AG04450 (cell line): ENCODE measurements at regions of chr4 and their contacts with region 1.

Region 1: GRCh38 chr4:3480528-3481112 is 17.5 kb downstream of the DOK7 start:
- DNase-seq: peak; percentile 55
- H3K4me3 ChIP-seq: no peak overlapping the region
- H3K27ac ChIP-seq: no peak overlapping the region
- H3K27me3 ChIP-seq: peaks cover 35% of the 10 kb centered on the region
- CTCF ChIP-seq: peak; percentile 98

Region 2: GRCh38 chr4:3145234-3145924 is 335.2 kb before region 1 on chr4:
- CTCF ChIA-PET with region 1: interaction called, 14 read pairs
- POLR2A ChIA-PET with region 1: no interaction called
- DNase-seq: no peak
- H3K4me3 ChIP-seq: no peak overlapping the region
- H3K27ac ChIP-seq: no peak overlapping the region
- H3K27me3 ChIP-seq: no peaks in the 10 kb centered on the region
- CTCF ChIP-seq: peak; percentile 42

Region 3: DNA sequence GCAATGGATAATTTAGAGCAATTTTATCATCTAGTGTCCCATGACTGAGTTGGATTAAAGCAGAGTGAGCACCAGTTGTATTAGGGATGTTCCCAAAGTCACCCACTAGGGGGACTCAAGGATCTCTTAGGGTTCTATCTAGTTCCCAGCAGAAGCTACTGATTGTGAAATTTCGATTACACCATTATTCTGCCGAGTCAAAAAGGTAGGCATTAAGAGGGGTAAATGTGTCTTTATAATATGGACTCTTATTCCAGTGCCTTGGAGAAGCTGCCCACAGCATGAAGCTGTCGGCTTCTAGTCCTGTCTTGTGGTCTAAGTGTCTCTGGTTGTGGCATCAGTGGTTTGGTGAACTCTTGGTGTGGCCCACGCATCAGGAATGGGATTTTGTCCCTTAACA is 134.5 kb before region 1 on chr4:
- CTCF ChIA-PET with region 1: interaction called, 94 read pairs
- POLR2A ChIA-PET with region 1: interaction called, 3 read pairs
- DNase-seq: peak; percentile 44
- H3K4me3 ChIP-seq: no peak overlapping the region
- H3K27ac ChIP-seq: no peak overlapping the region
- H3K27me3 ChIP-seq: no peaks in the 10 kb centered on the region
- CTCF ChIP-seq: peak; percentile 92

Region 4: GRCh38 chr4:3436798-3437581 is 43.6 kb before region 1 on chr4:
- CTCF ChIA-PET with region 1: interaction called, 10 read pairs
- POLR2A ChIA-PET with region 1: no interaction called
- DNase-seq: no peak
- H3K4me3 ChIP-seq: no peak overlapping the region
- H3K27ac ChIP-seq: no peak overlapping the region
- H3K27me3 ChIP-seq: no peaks in the 10 kb centered on the region
- CTCF ChIP-seq: no peak

Region 5: GRCh38 chr4:3491681-3492405 is 11.2 kb after region 1 on chr4:
- CTCF ChIA-PET with region 1: interaction called, 33 read pairs
- POLR2A ChIA-PET with region 1: no interaction called
- DNase-seq: peak; percentile 15
- H3K4me3 ChIP-seq: no peak overlapping the region
- H3K27ac ChIP-seq: no peak overlapping the region
- H3K27me3 ChIP-seq: peaks cover 10% of the 10 kb centered on the region
- CTCF ChIP-seq: no peak

Region 6: GRCh38 chr4:3514806-3515460 is 34.3 kb after region 1 on chr4:
- CTCF ChIA-PET with region 1: interaction called, 13 read pairs
- POLR2A ChIA-PET with region 1: no interaction called
- DNase-seq: no peak
- H3K4me3 ChIP-seq: no peak overlapping the region
- H3K27ac ChIP-seq: no peak overlapping the region
- H3K27me3 ChIP-seq: no peaks in the 10 kb centered on the region
- CTCF ChIP-seq: peak; percentile 34; the same call in 1 of the 2 replicates